GM12878 (cell line): ENCODE measurements at regions of chr19 and their contacts with region 1.

Region 1: GRCh38 chr19:33114302-33114701 is 17.6 kb upstream of the WDR88 start:
- DNase-seq: no peak
- ATAC-seq: no peak
- H3K4me3 ChIP-seq: no peak overlapping the region
- H3K27ac ChIP-seq: no peak overlapping the region
- H3K4me1 ChIP-seq: no peaks in the 10 kb centered on the region
- H3K27me3 ChIP-seq: no peaks in the 10 kb centered on the region
- CTCF ChIP-seq: no peak
- EP300 ChIP-seq: no peak
- POLR2A ChIP-seq: no peak
- RAD21 ChIP-seq: no peak

Region 2: DNA sequence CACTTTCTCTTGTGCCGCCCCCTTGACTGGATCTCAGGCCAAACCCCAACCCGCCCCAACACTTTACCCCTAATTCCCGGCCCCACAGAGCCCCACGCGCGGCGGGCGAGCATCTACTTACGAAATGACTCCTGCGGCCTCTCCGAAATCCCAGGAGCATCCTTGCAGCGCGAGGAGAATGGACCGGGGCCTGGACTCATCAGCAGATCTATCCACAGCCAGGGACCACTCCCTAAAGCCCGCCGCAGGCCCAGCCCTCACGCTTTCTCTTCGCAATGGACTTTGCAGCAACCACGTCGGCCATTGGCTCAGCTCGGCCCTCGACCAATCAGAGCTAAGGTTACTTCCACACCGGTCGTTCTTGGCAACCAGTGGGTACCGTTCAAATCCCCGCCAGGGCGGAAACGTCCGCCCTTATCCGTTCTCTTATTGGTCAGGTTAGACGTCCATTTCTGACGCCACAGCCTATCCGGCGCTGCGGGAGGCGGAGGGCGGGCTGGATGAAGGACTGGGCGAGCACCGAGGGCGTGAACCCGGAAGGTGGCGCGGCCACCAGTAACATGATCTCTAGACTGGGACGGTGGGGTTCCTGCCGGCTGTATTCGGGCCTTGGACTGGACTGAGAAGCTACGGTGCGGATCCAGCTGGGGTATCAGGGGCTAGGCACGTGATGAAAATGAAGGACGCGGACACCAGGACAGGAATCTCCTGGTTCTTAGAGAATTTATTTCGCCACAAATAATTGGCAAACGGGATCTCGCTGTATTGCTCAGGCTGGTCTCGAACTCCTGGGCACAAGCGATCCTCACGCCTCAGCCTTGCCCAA is 142.4 kb before region 1 on chr19 and contains the starts of genes CEP89 and FAAP24:
- CTCF ChIA-PET with region 1: interaction called, 12 read pairs
- POLR2A ChIA-PET with region 1: no interaction called
- RAD21 ChIA-PET with region 1: interaction called, 5 read pairs
- SMC1A ChIA-PET with region 1: no interaction called
- in situ Hi-C with region 1: loop called (anchors 5 kb)
- intact Hi-C with region 1: loop called (anchors 1 kb)
- DNase-seq: peak; percentile 100
- ATAC-seq: peak; percentile 100
- H3K4me3 ChIP-seq: peak within 1 kb of the TSS; percentile 95
- H3K27ac ChIP-seq: peak within 1 kb of the TSS; percentile 82
- H3K4me1 ChIP-seq: 0 out of 2 replicates have a peak, but pooled peaks cover 3% of the 10 kb centered on the region
- H3K27me3 ChIP-seq: no peaks in the 10 kb centered on the region
- CTCF ChIP-seq: no peak
- EP300 ChIP-seq: no peak
- POLR2A ChIP-seq: peak; percentile 94
- RAD21 ChIP-seq: no peak
- polyA plus RNA-seq, gene CEP89: 7.9 to 8.7 TPM
- polyA plus RNA-seq, gene FAAP24: 15.8 to 17.4 TPM